ENCODE measurements at regions of chr7 and their contacts with region 1.

Region 1: DNA sequence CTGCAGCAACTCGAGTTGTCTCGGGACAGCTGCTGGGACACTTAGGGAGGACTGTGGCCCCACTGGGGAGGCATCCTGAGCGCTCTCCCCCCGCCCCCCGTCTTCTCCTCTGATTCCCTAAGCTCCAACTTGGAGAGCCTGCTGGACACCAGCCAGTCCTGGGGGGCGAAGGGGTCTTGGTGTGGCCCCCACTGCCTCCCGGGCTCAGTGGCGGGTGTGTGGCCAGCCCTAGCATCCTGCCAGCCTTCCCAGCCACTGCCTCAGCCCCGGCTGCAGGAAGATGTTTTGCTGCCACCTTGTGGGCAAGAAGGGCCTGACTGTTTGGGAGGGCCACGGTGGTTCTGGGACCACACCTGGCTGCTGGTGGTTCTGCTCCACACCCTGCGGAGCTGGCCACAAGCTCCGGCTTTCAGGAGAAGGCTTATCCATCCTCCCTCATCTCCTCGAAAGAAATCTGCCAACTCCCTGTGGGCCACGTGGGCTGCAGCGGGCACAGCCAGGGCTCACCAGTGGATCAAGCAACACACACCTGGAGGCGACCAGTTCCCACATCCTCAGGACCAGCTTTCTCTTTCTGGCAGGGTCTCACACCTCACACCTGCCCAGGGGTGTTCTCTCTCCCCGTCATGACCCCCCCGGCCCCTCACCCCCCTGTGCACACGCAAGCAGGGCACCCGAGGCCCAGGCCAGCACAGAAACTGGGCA is 24.8 kb downstream of the AGAP3 start:
- DNase-seq: no peak
- ATAC-seq: peak; percentile 100
- H3K4me3 ChIP-seq: no peak overlapping the region
- H3K27ac ChIP-seq: no peak overlapping the region
- H3K4me1 ChIP-seq: no peaks in the 10 kb centered on the region
- H3K27me3 ChIP-seq: no peaks in the 10 kb centered on the region
- CTCF ChIP-seq: peak; percentile 86 to 93 (median 92)
- EP300 ChIP-seq: no peak
- POLR2A ChIP-seq: no peak
- RAD21 ChIP-seq: peak; percentile 88

Region 2: DNA sequence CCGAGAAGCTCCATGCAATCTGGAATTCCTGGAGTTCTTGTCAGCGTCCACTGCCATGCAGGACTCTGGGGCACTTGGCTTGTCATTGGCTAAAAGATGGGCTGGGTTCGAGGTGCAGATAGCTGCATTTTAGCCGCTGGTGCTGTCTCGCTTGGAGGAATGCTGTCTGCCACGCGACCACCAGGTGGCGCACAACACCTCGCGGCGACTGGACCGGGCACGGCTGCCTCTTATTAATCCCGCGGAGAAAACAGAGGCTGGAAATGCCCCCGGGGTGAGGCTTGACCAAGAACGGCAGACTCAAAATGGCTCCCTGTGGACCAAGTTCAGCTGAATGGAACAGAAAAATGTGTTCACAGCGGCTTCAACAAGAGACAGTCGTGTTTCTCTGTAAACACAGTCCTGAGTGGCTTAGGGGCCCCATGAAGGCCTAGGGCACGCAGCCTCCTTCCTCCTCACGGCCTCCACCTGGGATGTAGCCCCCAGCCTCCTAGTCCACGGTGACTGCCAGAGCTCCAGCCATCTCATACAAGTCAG is 212.6 kb before region 1 on chr7:
- CTCF ChIA-PET with region 1: interaction called, 5 read pairs
- POLR2A ChIA-PET with region 1: no interaction called
- RAD21 ChIA-PET with region 1: no interaction called
- SMC1A ChIA-PET with region 1: no interaction called
- in situ Hi-C with region 1: no loop called
- intact Hi-C with region 1: loop called (anchors 2 kb)
- DNase-seq: no peak
- ATAC-seq: peak; percentile 97
- H3K4me3 ChIP-seq: no peak overlapping the region
- H3K27ac ChIP-seq: no peak overlapping the region
- H3K4me1 ChIP-seq: peaks cover 16% of the 10 kb centered on the region
- H3K27me3 ChIP-seq: peaks cover 0 to 6% of the 10 kb centered on the region in 2 experiments; a peak in 2 of 4 replicates
- CTCF ChIP-seq: peak; percentile 89 to 97 (median 93); a peak in 5 of 6 replicates
- EP300 ChIP-seq: no peak
- POLR2A ChIP-seq: no peak
- RAD21 ChIP-seq: peak; percentile 70

Region 3: DNA sequence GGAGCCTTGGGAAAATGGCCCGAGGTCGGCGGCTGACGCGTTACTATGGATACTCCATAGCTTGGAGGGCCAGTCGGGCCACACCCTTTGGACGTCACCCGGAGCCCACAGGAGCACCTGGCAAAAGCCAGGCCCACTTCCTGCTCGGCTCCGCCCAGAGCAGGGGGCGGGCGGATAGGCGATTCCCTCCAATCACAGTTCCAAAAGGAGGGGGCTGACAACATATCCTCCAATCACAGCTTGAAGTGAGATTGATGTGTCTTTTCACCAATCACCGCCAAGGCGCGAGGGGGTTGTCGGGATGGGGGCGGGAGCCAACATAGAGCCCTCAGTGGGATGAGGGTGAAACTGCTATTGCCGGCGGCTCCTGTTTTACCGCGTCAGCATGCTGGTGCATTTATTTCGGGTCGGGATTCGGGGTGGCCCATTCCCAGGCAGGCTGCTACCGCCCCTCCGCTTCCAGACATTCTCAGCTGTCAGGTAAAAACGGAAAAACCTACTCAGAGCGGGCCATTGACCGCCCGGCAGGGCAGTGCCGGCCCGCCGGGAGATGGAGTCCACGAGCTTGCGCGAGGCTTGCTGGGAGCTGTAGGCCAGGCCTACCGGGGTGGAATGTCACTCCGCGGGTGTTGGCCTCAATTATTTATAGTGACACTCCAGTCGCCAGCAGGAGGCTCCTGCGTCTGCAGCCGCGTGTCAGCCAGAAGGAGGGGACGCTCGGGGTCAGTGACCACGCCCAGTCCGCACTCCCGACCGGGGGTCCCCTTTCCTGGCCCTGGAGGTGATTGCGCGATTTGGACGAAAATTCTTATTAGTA is 82.8 kb before region 1 on chr7 and contains the start of gene ABCB8:
- CTCF ChIA-PET with region 1: interaction called, 31 read pairs
- POLR2A ChIA-PET with region 1: interaction called, 3 read pairs
- RAD21 ChIA-PET with region 1: interaction called, 4 read pairs
- SMC1A ChIA-PET with region 1: interaction called, 15 read pairs
- in situ Hi-C with region 1: no loop called
- intact Hi-C with region 1: loop called (anchors 2 kb)
- DNase-seq: peak; percentile 98
- ATAC-seq: peak; percentile 96
- H3K4me3 ChIP-seq: peak within 1 kb of the TSS; percentile 81
- H3K27ac ChIP-seq: peak within 1 kb of the TSS; percentile 47
- H3K4me1 ChIP-seq: peaks cover 4% of the 10 kb centered on the region
- H3K27me3 ChIP-seq: no peaks in the 10 kb centered on the region; a peak in 1 of 4 replicates
- CTCF ChIP-seq: peak; percentile 22 to 57 (median 53); a peak in 4 of 6 replicates
- EP300 ChIP-seq: no peak
- POLR2A ChIP-seq: peak; percentile 60; the same call in 1 of the 2 replicates
- RAD21 ChIP-seq: 0 out of 2 replicates have a peak, but pooled peaks have one; percentile 34
- polyA plus RNA-seq, gene ABCB8: 0.77 to 1.2 TPM

Region 4: DNA sequence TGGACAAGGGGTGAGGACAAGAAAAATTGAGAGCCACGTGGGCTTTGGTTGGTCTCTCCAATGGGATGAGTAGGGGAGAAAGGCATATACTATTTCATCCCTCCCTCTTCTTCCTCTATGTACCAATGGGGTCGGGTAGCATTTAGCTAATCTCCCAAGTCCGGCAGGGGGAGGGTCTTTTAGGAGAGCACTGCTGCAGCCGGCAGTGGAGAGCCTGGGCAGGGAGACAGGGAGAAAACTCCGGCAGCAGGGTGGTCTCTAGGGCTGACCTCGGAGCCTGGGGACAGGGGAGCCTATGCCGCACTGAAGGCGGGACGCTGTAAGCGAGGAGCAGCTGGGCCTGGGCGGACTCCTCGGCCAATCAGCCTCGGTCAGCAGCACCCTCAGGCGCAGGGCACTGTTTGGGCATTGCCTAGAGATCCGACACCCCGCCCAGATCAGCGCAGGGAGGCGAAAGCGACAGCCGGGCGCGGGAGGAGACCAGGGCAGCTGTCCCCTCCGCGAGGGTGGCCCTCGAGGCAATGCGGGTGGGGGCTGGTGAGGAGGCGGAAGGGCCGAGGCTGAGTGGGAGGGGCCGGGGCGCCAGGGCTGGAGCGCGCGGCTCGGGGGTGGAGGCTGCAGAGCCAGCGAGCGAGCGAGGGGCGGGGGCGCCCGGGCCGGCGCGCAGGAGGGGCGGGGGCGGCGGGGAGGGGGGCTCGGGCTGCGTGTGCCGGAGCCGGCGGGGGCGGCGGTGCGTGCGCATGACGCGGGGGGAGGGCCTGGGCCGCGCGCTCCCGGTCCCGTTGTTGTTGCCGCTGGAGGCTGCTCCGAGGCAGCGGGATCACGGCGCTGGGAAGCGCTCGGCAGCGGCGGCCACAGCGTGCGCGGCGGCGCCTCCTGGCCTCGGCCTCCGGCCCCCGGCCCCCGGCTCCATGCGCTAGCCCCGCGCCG is 25.1 kb before region 1 on chr7 and contains the start of gene AGAP3:
- CTCF ChIA-PET with region 1: interaction called, 17 read pairs
- POLR2A ChIA-PET with region 1: interaction called, 4 read pairs
- RAD21 ChIA-PET with region 1: interaction called, 5 read pairs
- SMC1A ChIA-PET with region 1: interaction called, 9 read pairs
- in situ Hi-C with region 1: no loop called
- intact Hi-C with region 1: loop called (anchors 2 kb)
- DNase-seq: no peak
- ATAC-seq: peak; percentile 55
- H3K4me3 ChIP-seq: peak within 1 kb of the TSS; percentile 87
- H3K27ac ChIP-seq: peak within 1 kb of the TSS; percentile 80
- H3K4me1 ChIP-seq: peaks cover 36% of the 10 kb centered on the region
- H3K27me3 ChIP-seq: no peaks in the 10 kb centered on the region
- CTCF ChIP-seq: no peak
- EP300 ChIP-seq: no peak
- POLR2A ChIP-seq: peak; percentile 85
- RAD21 ChIP-seq: no peak
- polyA plus RNA-seq, gene AGAP3: 1.8 to 4.7 TPM

Region 5: DNA sequence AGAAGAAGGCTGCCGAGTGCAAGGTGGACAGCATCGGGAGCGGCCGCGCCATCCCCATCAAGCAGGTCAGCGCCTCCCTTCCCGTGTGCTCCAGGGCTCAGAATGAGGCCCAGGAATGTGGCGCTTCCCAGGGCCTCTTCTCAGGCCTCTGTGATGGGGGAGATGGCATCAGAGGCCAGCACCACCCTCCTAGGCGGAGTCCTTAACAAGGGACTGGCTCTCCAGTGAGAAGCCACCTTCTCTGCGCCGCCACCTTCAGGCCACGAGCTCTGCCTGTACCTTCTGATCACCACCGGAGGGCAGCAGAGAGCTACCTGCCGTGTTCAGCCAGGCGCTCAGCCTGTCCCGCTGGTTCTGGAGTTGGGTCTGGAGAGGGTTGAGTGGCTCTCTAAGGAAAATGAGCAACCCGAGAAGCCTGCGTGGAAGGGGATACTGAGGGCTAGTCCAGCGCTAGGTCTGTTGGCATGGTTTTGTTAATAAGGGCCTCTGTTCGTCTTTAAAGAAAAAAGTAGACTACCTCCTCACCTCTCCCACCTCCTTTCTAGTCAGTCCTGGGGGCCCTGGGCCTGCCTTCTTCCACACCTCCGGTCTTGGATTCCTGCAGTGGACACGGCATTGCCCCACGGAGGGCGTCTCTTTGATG is 12.8 kb after region 1 on chr7:
- CTCF ChIA-PET with region 1: interaction called, 17 read pairs
- POLR2A ChIA-PET with region 1: no interaction called
- RAD21 ChIA-PET with region 1: no interaction called
- SMC1A ChIA-PET with region 1: no interaction called
- in situ Hi-C with region 1: no loop called
- intact Hi-C with region 1: no loop called
- DNase-seq: no peak
- ATAC-seq: peak; percentile 99
- H3K4me3 ChIP-seq: no peak overlapping the region
- H3K27ac ChIP-seq: no peak overlapping the region
- H3K4me1 ChIP-seq: no peaks in the 10 kb centered on the region
- H3K27me3 ChIP-seq: no peaks in the 10 kb centered on the region
- CTCF ChIP-seq: peak; percentile 99; a peak in 5 of 6 replicates
- EP300 ChIP-seq: no peak
- POLR2A ChIP-seq: no peak; the same call in 1 of the 2 replicates
- RAD21 ChIP-seq: peak; percentile 86

Region 6: GRCh38 chr7:151137076-151137675 is 26.1 kb after region 1 on chr7:
- CTCF ChIA-PET with region 1: no interaction called
- POLR2A ChIA-PET with region 1: no interaction called
- RAD21 ChIA-PET with region 1: no interaction called
- SMC1A ChIA-PET with region 1: no interaction called
- in situ Hi-C with region 1: no loop called
- intact Hi-C with region 1: no loop called
- DNase-seq: no peak
- ATAC-seq: no peak
- H3K4me3 ChIP-seq: no peak overlapping the region
- H3K27ac ChIP-seq: no peak overlapping the region
- H3K4me1 ChIP-seq: no peaks in the 10 kb centered on the region
- H3K27me3 ChIP-seq: no peaks in the 10 kb centered on the region
- CTCF ChIP-seq: no peak
- EP300 ChIP-seq: no peak
- POLR2A ChIP-seq: no peak
- RAD21 ChIP-seq: no peak

Region 7: DNA sequence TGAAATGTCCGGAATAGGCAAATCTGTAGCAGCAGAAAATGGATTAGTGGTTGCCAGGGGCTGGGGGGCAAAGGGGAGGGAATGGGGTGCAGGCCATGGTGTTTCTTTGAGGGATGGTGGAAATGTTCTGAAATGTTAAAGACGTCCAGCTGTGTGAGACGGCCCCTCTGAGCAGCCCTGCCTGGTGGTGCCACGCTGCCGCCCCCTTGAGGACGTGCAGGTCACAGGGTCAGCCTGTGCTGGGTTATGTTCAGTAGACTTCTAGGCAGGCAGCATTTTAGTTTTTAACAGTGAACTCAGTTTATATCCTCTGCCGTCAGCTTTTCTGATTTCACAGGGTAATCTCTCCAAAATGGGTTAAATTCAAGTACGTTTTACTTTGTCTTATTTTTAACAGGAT is 239.9 kb after region 1 on chr7:
- CTCF ChIA-PET with region 1: no interaction called
- POLR2A ChIA-PET with region 1: no interaction called
- RAD21 ChIA-PET with region 1: no interaction called
- SMC1A ChIA-PET with region 1: no interaction called
- in situ Hi-C with region 1: no loop called
- intact Hi-C with region 1: no loop called
- DNase-seq: no peak
- ATAC-seq: peak; percentile 76
- H3K4me3 ChIP-seq: peak overlapping the region; percentile 34; the same call in 1 of the 2 replicates
- H3K27ac ChIP-seq: peak overlapping the region; percentile 94
- H3K4me1 ChIP-seq: peaks cover 37% of the 10 kb centered on the region
- H3K27me3 ChIP-seq: no peaks in the 10 kb centered on the region
- CTCF ChIP-seq: peak; percentile 56 to 67 (median 59)
- EP300 ChIP-seq: no peak
- POLR2A ChIP-seq: no peak
- RAD21 ChIP-seq: peak; percentile 54